Naive thymus-derived CD4-positive, alpha-beta T cell (primary cell): ENCODE measurements at regions of chr19 and their contacts with region 1.

Region 1: GRCh38 chr19:15379083-15379995 is at the start of gene AKAP8:
- DNase-seq: peak; percentile 93 to 99 (median 98)
- ATAC-seq: peak; percentile 96
- H3K4me3 ChIP-seq: peak within 1 kb of the TSS; percentile 98
- H3K4me3 Mint-ChIP-seq: peak within 1 kb of the TSS; percentile 93 to 100 (median 99)
- H3K27ac ChIP-seq: peak within 1 kb of the TSS; percentile 97
- H3K27ac Mint-ChIP-seq: peak within 1 kb of the TSS; percentile 97 to 100 (median 100)
- H3K4me1 ChIP-seq: peaks cover 24 to 28% of the 10 kb centered on the region in 2 donors
- H3K4me1 Mint-ChIP-seq: peaks cover 13 to 46% (median 35%) of the 10 kb centered on the region in 7 donors
- H3K27me3 ChIP-seq: no peaks in the 10 kb centered on the region
- H3K27me3 Mint-ChIP-seq: no peaks in the 10 kb centered on the region
- total RNA-seq, gene AKAP8: 60.0 to 81.2 (median 80.2) TPM

Region 2: GRCh38 chr19:15177269-15178116 is 201.8 kb before region 1 on chr19:
- CTCF ChIA-PET with region 1: no interaction called
- POLR2A ChIA-PET with region 1: no interaction called
- intact Hi-C with region 1: loop called in 1 of 2 experiments (anchors 10 kb)
- DNase-seq: peak; percentile 66 to 88 (median 82)
- ATAC-seq: peak; percentile 99
- H3K4me3 ChIP-seq: no peak overlapping the region
- H3K4me3 Mint-ChIP-seq: peak overlapping the region; percentile 29 to 84 (median 53)
- H3K27ac ChIP-seq: no peak overlapping the region
- H3K27ac Mint-ChIP-seq: peak overlapping the region in 1 of 9 donors; percentile 47
- H3K4me1 ChIP-seq: peaks cover 0 to 5% of the 10 kb centered on the region in 2 donors
- H3K4me1 Mint-ChIP-seq: peaks cover 4 to 8% (median 5%) of the 10 kb centered on the region in 7 donors
- H3K27me3 ChIP-seq: no peaks in the 10 kb centered on the region
- H3K27me3 Mint-ChIP-seq: peaks cover 0 to 20% (median 9%) of the 10 kb centered on the region in 5 donors

Region 3: GRCh38 chr19:15264061-15264932 is 115.0 kb before region 1 on chr19:
- CTCF ChIA-PET with region 1: no interaction called
- POLR2A ChIA-PET with region 1: no interaction called
- intact Hi-C with region 1: loop called (anchors 1 to 2 kb)
- DNase-seq: peak; percentile 54 to 77 (median 65)
- ATAC-seq: peak; percentile 79
- H3K4me3 ChIP-seq: no peak overlapping the region
- H3K4me3 Mint-ChIP-seq: no peak overlapping the region
- H3K27ac ChIP-seq: no peak overlapping the region
- H3K27ac Mint-ChIP-seq: peak overlapping the region in 2 of 9 donors; percentile 14 to 38
- H3K4me1 ChIP-seq: no peaks in the 10 kb centered on the region
- H3K4me1 Mint-ChIP-seq: peaks cover 7 to 19% (median 11%) of the 10 kb centered on the region in 7 donors
- H3K27me3 ChIP-seq: no peaks in the 10 kb centered on the region
- H3K27me3 Mint-ChIP-seq: no peaks in the 10 kb centered on the region

Region 4: GRCh38 chr19:15418588-15419412 is 39.5 kb after region 1 on chr19 and contains the start of gene AKAP8L:
- CTCF ChIA-PET with region 1: interaction called, 16 read pairs
- POLR2A ChIA-PET with region 1: interaction called, 94 read pairs
- intact Hi-C with region 1: loop called (anchors 1 kb)
- DNase-seq: peak; percentile 90 to 100 (median 99)
- ATAC-seq: peak; percentile 95
- H3K4me3 ChIP-seq: peak within 1 kb of the TSS; percentile 71
- H3K4me3 Mint-ChIP-seq: peak within 1 kb of the TSS; percentile 92 to 100 (median 99)
- H3K27ac ChIP-seq: peak within 1 kb of the TSS; percentile 88
- H3K27ac Mint-ChIP-seq: peak within 1 kb of the TSS; percentile 94 to 99 (median 97)
- H3K4me1 ChIP-seq: peaks cover 23 to 25% of the 10 kb centered on the region in 2 donors
- H3K4me1 Mint-ChIP-seq: peaks cover 31 to 53% (median 42%) of the 10 kb centered on the region in 7 donors
- H3K27me3 ChIP-seq: no peaks in the 10 kb centered on the region
- H3K27me3 Mint-ChIP-seq: no peaks in the 10 kb centered on the region
- total RNA-seq, gene AKAP8L: 81.2 to 208 (median 146) TPM

Region 5: DNA sequence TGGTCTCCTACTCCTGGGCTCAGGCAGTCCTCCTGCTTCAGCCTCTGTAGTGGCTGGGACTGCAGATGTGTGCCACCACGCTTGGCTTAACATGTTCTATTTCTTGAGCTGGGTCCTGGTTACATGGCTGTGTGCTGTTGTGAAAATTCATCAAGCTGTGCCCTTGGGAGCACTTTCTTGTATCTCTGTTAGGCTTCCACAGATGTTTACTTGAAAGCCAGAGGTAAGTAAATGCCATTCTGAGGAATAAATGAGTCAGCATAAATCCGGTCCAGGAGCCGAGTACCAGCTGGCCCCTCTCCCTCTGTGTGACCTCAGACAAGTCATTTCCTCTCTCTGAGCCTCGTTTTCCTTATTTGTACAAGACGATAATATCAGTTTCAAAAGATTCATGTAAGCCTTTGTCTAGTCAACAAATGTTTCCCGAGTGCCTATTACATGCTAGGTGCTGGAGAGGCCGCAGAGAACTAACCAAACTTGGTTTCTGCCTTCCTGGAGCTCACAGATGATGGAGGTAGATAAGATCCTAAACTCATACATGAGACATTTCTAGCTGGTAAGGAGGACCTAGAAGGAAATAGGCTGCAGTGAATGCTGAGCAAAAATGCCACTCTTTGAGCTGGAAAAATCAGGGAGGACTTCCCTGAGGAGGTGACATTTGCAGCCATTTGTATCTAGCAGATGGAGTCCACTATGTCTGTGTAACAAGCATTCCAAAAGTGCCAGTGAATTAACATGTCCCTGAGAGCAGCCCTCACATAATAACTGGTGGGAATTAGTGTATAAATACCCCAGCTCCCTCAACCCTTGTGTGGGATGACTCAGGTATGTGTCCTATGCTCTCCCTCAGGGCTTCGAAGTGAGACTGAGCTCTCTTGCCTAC is 87.8 kb after region 1 on chr19:
- CTCF ChIA-PET with region 1: interaction called, 4 read pairs
- POLR2A ChIA-PET with region 1: interaction called, 23 read pairs
- intact Hi-C with region 1: loop called (anchors 1 kb)
- DNase-seq: peak in 6 of 9 donors; percentile 17 to 58 (median 32)
- ATAC-seq: peak; percentile 42
- H3K4me3 ChIP-seq: peak overlapping the region; percentile 1
- H3K4me3 Mint-ChIP-seq: peak overlapping the region; percentile 63 to 95 (median 76)
- H3K27ac ChIP-seq: peak overlapping the region; percentile 52
- H3K27ac Mint-ChIP-seq: peak overlapping the region; percentile 85 to 95 (median 87)
- H3K4me1 ChIP-seq: peaks cover 43 to 47% of the 10 kb centered on the region in 2 donors
- H3K4me1 Mint-ChIP-seq: peaks cover 39 to 75% (median 53%) of the 10 kb centered on the region in 7 donors
- H3K27me3 ChIP-seq: no peaks in the 10 kb centered on the region
- H3K27me3 Mint-ChIP-seq: peaks cover 0 to 14% (median 0%) of the 10 kb centered on the region in 5 donors

Region 6: GRCh38 chr19:16470911-16471811 is 1091.8 kb after region 1 on chr19:
- CTCF ChIA-PET with region 1: no interaction called
- POLR2A ChIA-PET with region 1: interaction called, 3 read pairs
- intact Hi-C with region 1: loop called in 1 of 2 experiments (anchors 5 kb)
- DNase-seq: peak in 5 of 9 donors; percentile 14 to 40 (median 18)
- ATAC-seq: peak; percentile 2
- H3K4me3 ChIP-seq: peak overlapping the region; percentile 96
- H3K4me3 Mint-ChIP-seq: peak overlapping the region; percentile 84 to 93 (median 88)
- H3K27ac ChIP-seq: peak overlapping the region; percentile 96
- H3K27ac Mint-ChIP-seq: peak overlapping the region; percentile 18 to 87 (median 79)
- H3K4me1 ChIP-seq: peaks cover 5 to 15% of the 10 kb centered on the region in 2 donors
- H3K4me1 Mint-ChIP-seq: peaks cover 30 to 47% (median 41%) of the 10 kb centered on the region in 7 donors
- H3K27me3 ChIP-seq: no peaks in the 10 kb centered on the region
- H3K27me3 Mint-ChIP-seq: peaks cover 0 to 2% (median 0%) of the 10 kb centered on the region in 5 donors

Region 7: DNA sequence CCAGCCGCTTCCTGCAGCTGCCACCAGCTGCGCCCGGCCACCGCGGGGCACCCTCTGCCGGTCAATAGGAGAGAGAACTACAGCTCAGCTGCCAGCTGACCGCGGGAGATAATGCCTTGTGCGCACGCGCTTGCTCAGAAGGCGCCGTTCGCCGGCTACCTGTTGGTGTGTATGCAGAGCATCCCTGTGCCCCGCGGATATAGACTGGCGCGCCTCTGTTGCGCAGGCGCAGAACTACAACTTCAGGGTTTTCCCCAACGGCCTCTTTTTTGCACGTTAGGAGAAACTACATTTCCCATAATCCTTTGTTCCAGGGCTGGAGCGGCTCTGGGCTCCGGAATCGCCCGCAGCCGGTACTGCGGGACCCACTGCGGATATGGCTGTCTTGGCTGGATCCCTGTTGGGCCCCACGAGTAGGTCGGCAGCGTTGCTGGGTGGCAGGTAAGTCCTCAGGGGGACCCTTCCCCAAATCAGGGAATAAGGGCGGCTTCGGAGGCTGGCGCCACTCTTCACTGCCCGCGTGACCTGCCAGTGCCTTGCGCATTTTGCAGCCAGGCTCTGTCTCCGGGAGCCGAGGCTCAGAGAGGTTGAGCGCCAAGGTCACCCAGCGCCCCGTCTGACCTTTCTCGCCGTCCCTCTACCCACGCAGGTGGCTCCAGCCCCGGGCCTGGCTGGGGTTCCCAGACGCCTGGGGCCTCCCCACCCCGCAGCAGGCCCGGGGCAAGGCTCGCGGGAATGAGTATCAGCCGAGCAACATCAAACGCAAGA is 1926.4 kb after region 1 on chr19 and contains the start of gene MRPL34:
- CTCF ChIA-PET with region 1: no interaction called
- POLR2A ChIA-PET with region 1: no interaction called
- intact Hi-C with region 1: loop called in 1 of 2 experiments (anchors 5 kb)
- DNase-seq: peak; percentile 81 to 96 (median 93)
- ATAC-seq: peak; percentile 65
- H3K4me3 ChIP-seq: peak within 1 kb of the TSS; percentile 93
- H3K4me3 Mint-ChIP-seq: peak within 1 kb of the TSS; percentile 82 to 94 (median 90)
- H3K27ac ChIP-seq: peak within 1 kb of the TSS; percentile 81
- H3K27ac Mint-ChIP-seq: peak within 1 kb of the TSS; percentile 82 to 93 (median 90)
- H3K4me1 ChIP-seq: peaks cover 22 to 32% of the 10 kb centered on the region in 2 donors
- H3K4me1 Mint-ChIP-seq: peaks cover 28 to 64% (median 57%) of the 10 kb centered on the region in 7 donors
- H3K27me3 ChIP-seq: no peaks in the 10 kb centered on the region
- H3K27me3 Mint-ChIP-seq: no peaks in the 10 kb centered on the region
- total RNA-seq, gene MRPL34: 37.0 to 76.0 (median 73.3) TPM